ENCODE measurements at regions of chr1 and their contacts with region 1.

Region 1: GRCh38 chr1:180631766-180632325 is at the start of gene XPR1:
- DNase-seq: peak; percentile 97 to 99
- H3K4me3 ChIP-seq: peak within 1 kb of the TSS; percentile 82
- H3K4me3 Mint-ChIP-seq: no peak within 1 kb of the TSS
- H3K27ac Mint-ChIP-seq: no peak within 1 kb of the TSS
- H3K4me1 ChIP-seq: peaks cover 31% of the 10 kb centered on the region
- H3K4me1 Mint-ChIP-seq: peaks cover 10% of the 10 kb centered on the region
- H3K27me3 ChIP-seq: no peaks in the 10 kb centered on the region
- H3K27me3 Mint-ChIP-seq: no peaks in the 10 kb centered on the region
- CTCF ChIP-seq: peak in 1 of 2 experiments; percentile 44
- total RNA-seq, gene XPR1: 34.4 and 37.1 TPM in 2 replicates

Region 2: GRCh38 chr1:180507811-180508297 is 124.0 kb before region 1 on chr1:
- CTCF ChIA-PET with region 1: no interaction called
- POLR2A ChIA-PET with region 1: interaction called, 11 read pairs
- intact Hi-C with region 1: no loop called
- DNase-seq: no peak
- H3K4me3 ChIP-seq: no peak overlapping the region
- H3K4me3 Mint-ChIP-seq: no peak overlapping the region
- H3K27ac Mint-ChIP-seq: no peak overlapping the region
- H3K4me1 ChIP-seq: no peaks in the 10 kb centered on the region
- H3K4me1 Mint-ChIP-seq: no peaks in the 10 kb centered on the region
- H3K27me3 ChIP-seq: no peaks in the 10 kb centered on the region
- H3K27me3 Mint-ChIP-seq: no peaks in the 10 kb centered on the region
- CTCF ChIP-seq: no peak

Region 3: GRCh38 chr1:180521474-180522207 is 110.2 kb before region 1 on chr1:
- CTCF ChIA-PET with region 1: interaction called, 3 read pairs
- POLR2A ChIA-PET with region 1: interaction called, 7 read pairs
- intact Hi-C with region 1: loop called (anchors 1 kb)
- DNase-seq: peak; percentile 84 to 87
- H3K4me3 ChIP-seq: no peak overlapping the region
- H3K4me3 Mint-ChIP-seq: peak overlapping the region; percentile 69
- H3K27ac Mint-ChIP-seq: peak overlapping the region; percentile 70
- H3K4me1 ChIP-seq: peaks cover 51% of the 10 kb centered on the region
- H3K4me1 Mint-ChIP-seq: peaks cover 68% of the 10 kb centered on the region
- H3K27me3 ChIP-seq: no peaks in the 10 kb centered on the region
- H3K27me3 Mint-ChIP-seq: no peaks in the 10 kb centered on the region
- CTCF ChIP-seq: no peak

Region 4: DNA sequence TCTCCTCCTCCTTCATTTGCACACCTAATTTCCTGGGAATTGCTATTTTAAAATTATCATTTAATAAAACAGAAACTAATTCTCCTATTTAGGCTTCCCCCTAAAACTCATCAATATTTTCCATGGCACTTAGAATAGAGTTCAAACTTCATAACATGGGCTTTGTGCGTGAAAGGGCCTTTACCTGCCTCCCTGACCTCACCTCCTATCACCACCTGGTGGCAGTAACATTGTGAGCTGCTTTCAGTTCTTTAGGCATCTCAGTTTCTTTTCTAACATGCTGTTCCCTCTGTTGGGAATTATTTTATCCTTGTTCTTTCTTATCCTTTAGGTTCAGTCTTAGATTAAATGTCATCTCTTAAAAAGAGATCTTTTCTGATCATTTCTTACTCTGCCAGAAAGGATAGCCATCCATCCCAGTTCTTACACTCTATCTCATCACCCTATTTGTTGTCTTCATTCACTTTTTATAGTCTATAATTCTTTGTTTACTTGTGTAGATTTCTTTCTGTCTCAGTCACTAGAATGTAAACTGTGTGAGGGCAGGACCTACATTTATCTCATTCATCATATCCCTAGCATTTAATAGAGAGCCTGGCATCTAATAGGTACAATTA is 147.0 kb after region 1 on chr1:
- CTCF ChIA-PET with region 1: interaction called, 3 read pairs
- POLR2A ChIA-PET with region 1: no interaction called
- intact Hi-C with region 1: loop called (anchors 1 kb)
- DNase-seq: peak; percentile 39 to 43
- H3K4me3 ChIP-seq: no peak overlapping the region
- H3K4me3 Mint-ChIP-seq: no peak overlapping the region
- H3K27ac Mint-ChIP-seq: no peak overlapping the region
- H3K4me1 ChIP-seq: 0 out of 2 replicates have a peak, but pooled peaks cover under 1% of the 10 kb centered on the region
- H3K4me1 Mint-ChIP-seq: peaks cover 24% of the 10 kb centered on the region
- H3K27me3 ChIP-seq: no peaks in the 10 kb centered on the region
- H3K27me3 Mint-ChIP-seq: no peaks in the 10 kb centered on the region
- CTCF ChIP-seq: peak; percentile 53 to 81

Region 5: DNA sequence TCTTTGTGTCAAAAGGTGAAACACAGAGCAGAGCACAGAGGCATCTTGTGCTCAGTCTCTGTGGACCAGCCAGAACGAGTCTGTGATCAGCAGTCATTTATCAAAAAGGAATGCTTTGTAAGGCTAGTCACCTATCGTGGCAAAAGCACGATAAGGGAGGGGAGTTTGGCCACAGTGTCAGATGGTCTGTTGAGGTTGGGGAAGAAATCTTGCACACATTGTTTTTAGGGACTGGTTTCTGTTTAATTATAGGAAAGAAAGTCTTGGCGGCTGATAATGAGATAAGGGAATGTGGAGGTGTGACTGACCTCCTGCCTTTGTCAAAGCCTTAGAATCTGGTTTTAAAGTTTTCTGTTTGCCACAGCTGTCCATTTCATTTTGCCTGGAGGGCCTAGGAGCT is 222.6 kb after region 1 on chr1:
- CTCF ChIA-PET with region 1: no interaction called
- POLR2A ChIA-PET with region 1: no interaction called
- intact Hi-C with region 1: loop called (anchors 2 kb)
- DNase-seq: peak in 1 of 2 experiments; percentile 48
- H3K4me3 ChIP-seq: no peak overlapping the region
- H3K4me3 Mint-ChIP-seq: peak overlapping the region; percentile 47
- H3K27ac Mint-ChIP-seq: no peak overlapping the region
- H3K4me1 ChIP-seq: peaks cover 14% of the 10 kb centered on the region
- H3K4me1 Mint-ChIP-seq: peaks cover 22% of the 10 kb centered on the region
- H3K27me3 ChIP-seq: no peaks in the 10 kb centered on the region
- H3K27me3 Mint-ChIP-seq: no peaks in the 10 kb centered on the region
- CTCF ChIP-seq: no peak

Measured in Caco-2 (cell line).